ENCODE measurements at regions of chrX and their contacts with region 1.

Region 1: GRCh38 chrX:1453951-1454785 is 1.5 kb upstream of the ASMTL start:
- DNase-seq: peak; percentile 91
- H3K4me3 ChIP-seq: peak overlapping the region; percentile 18 to 62 (median 42)
- H3K27ac ChIP-seq: peak overlapping the region; percentile 88 to 100 (median 96)
- H3K4me1 ChIP-seq: peaks cover 9 to 25% (median 18%) of the 10 kb centered on the region in 4 donors
- H3K27me3 ChIP-seq: no peaks in the 10 kb centered on the region
- CTCF ChIP-seq: peak; percentile 92 to 99 (median 95)
- EP300 ChIP-seq: no peak
- POLR2A ChIP-seq: no peak

Region 2: DNA sequence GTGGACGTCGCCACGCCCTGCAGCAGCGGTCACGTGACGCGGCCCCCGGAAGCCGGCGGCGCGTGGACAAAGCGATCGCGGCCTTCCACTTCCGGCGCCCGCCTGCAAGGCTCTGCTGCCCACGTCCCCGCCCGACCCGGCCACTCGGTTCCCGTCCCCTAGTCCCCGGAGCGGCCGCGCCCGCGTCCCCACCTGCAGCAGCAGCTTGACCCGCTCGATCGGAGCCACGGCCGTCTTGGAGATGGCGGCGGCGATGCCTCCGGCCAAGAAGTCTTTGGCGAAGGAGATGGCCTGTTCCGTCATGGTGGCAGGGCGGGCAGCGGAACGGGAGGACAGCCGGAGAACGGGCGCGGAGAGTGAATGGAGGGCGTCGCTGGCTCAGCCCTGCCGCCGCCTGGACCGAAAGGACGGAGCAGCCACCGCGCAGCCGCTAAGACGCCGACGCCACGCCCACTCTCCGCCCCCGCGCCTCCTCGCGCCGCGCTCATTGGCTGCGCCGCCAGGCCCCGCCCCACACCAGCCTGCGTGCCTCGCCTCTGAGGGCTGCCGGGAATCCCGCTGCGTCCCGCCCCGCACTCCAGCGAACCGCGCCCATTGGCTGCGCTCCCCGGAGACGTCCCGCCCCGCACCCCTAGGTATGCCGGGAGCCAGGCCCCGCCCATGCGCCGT is 62.3 kb before region 1 on chrX and contains the start of gene SLC25A6:
- in situ Hi-C with region 1: no loop called
- intact Hi-C with region 1: loop called (anchors 1 kb)
- DNase-seq: peak; percentile 99
- H3K4me3 ChIP-seq: peak within 1 kb of the TSS; percentile 84 to 98 (median 96)
- H3K27ac ChIP-seq: peak within 1 kb of the TSS; percentile 96 to 100 (median 98)
- H3K4me1 ChIP-seq: peaks cover 10 to 43% (median 34%) of the 10 kb centered on the region in 4 donors
- H3K27me3 ChIP-seq: no peaks in the 10 kb centered on the region
- CTCF ChIP-seq: peak in 2 of 5 experiments; percentile 47 to 62
- EP300 ChIP-seq: no peak
- POLR2A ChIP-seq: peak; percentile 94
- total RNA-seq, gene SLC25A6: 473 to 699 (median 574) TPM

Region 3: DNA sequence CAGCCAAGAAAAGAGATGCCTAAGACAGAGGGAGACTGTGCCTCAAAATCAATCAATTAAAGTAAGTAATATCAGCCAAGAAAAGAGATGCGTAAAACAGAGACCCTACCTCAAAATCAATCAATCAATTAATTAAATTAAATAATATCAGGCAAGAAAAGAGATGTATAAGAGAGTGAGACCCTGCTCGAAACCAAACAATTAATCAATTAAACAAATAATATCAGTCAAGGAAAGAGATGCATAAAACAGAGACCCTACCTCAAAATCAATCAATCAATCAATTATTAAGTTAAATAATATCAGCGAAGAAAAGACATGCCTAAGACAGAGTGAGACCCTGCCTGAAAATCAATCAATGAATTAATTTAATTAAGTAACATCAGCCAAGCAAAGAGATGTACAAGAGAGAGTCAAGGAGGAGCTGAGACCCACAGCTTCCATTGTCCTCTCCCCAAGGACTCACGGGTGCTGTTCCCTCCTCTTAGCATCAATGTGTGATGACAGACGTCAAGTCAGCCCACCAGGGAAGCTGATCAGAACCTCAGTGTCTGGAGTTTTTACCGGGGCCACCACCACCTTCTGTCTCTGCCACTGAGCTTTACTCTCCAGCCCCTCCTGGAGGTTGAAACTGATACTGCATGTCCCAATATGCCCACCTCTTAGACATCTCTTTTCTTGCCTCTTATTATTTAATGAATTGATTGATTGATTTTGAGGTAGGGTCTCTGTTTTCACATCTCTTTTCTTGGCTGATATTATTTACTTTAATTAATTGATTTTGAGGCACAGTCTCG is 126.8 kb after region 1 on chrX:
- in situ Hi-C with region 1: loop called in 1 of 4 experiments (anchors 25 kb)
- intact Hi-C with region 1: loop called (anchors 5 kb)
- DNase-seq: peak; percentile 65
- H3K4me3 ChIP-seq: no peak overlapping the region
- H3K27ac ChIP-seq: no peak overlapping the region
- H3K4me1 ChIP-seq: peaks cover 0 to 3% (median 0%) of the 10 kb centered on the region in 4 donors
- H3K27me3 ChIP-seq: no peaks in the 10 kb centered on the region
- CTCF ChIP-seq: peak; percentile 69 to 91 (median 78)
- EP300 ChIP-seq: no peak
- POLR2A ChIP-seq: no peak

Region 4: GRCh38 chrX:1591102-1591900 is 137.1 kb after region 1 on chrX and contains the start of gene AKAP17A:
- in situ Hi-C with region 1: loop called in 2 of 4 experiments (anchors 10 to 25 kb)
- intact Hi-C with region 1: no loop called
- DNase-seq: peak; percentile 98
- H3K4me3 ChIP-seq: peak within 1 kb of the TSS; percentile 89 to 99 (median 96)
- H3K27ac ChIP-seq: peak within 1 kb of the TSS; percentile 86 to 96 (median 94)
- H3K4me1 ChIP-seq: peaks cover 4 to 22% (median 14%) of the 10 kb centered on the region in 4 donors
- H3K27me3 ChIP-seq: no peaks in the 10 kb centered on the region
- CTCF ChIP-seq: no peak
- EP300 ChIP-seq: no peak
- POLR2A ChIP-seq: peak; percentile 61
- total RNA-seq, gene AKAP17A: 53.7 to 134 (median 97.7) TPM

Region 5: DNA sequence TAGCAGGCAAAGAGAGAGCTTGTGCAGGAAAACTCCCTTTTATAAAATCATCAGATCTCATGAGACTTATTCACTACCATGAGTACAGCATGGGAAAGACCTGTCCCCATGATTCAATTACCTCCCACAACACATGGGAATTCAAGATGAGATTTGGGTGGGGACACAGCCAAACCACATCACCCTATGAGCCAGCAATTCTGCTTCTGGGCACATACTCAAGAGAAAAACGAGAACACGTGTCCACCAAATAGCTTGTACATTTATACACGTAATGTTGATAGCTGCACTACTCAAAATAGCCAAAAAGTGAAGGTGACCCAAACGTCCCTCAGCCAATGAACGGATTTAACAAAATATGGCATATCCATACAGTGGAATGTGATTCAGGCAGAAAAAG is 1141.1 kb after region 1 on chrX:
- in situ Hi-C with region 1: loop called in 2 of 4 experiments (anchors 25 kb)
- intact Hi-C with region 1: loop called (anchors 10 kb)
- DNase-seq: no peak
- H3K4me3 ChIP-seq: no peak overlapping the region
- H3K27ac ChIP-seq: no peak overlapping the region
- H3K4me1 ChIP-seq: peaks cover 0 to 6% (median 2%) of the 10 kb centered on the region in 4 donors
- H3K27me3 ChIP-seq: no peaks in the 10 kb centered on the region
- CTCF ChIP-seq: no peak
- EP300 ChIP-seq: no peak
- POLR2A ChIP-seq: no peak

Region 6: DNA sequence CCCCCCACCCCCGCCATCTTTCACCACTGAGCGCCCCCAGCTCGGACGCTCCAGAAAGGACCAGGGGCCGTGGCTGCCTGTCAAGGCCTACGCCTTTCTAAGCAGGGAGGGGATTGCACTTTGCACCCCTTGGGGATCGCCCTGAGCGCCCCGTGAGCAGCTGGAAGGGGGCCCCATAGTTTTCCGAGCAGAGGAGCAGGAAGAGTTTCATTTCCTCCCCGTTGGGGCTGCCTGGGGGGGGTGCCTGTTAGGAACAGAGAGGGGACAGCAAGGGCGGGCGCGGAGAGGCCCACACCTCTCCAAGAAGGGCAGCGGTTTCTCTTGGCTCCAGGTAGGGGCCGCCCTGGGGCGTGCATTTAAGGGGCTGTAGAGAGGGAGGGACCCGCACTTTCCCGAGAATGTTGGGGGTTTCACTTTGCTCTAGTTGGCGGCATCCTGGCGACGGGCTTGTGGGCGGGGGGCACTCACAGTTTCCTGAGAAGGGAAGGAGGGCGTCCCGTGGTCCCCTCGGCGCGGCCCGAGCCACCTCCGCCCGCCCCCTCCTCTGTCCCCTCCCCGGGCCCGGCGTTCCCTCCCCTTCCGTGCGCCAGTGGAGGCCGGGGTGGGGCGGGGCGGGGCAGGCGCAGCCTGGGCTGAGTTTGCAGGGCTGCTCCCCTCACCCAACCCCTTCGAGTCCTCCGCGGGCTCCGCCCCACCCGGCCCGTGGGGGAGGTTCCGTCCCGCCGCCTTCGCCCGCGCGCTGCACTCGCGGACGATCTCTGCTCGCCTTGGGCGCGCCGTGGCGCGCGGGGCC is 1154.7 kb after region 1 on chrX:
- in situ Hi-C with region 1: loop called in 2 of 4 experiments (anchors 25 kb)
- intact Hi-C with region 1: no loop called
- DNase-seq: peak; percentile 93
- H3K4me3 ChIP-seq: peak overlapping the region; percentile 64 to 92 (median 82)
- H3K27ac ChIP-seq: peak overlapping the region; percentile 83 to 90 (median 86)
- H3K4me1 ChIP-seq: peaks cover 0 to 22% (median 13%) of the 10 kb centered on the region in 4 donors
- H3K27me3 ChIP-seq: no peaks in the 10 kb centered on the region
- CTCF ChIP-seq: no peak
- EP300 ChIP-seq: no peak
- POLR2A ChIP-seq: peak; percentile 67

Measured in transverse colon (tissue), 4 donors.